Activated naive CD4-positive, alpha-beta T cell treated with anti-CD3 and anti-CD28 coated beads for 36 hours (primary cell): ENCODE measurements at regions of chr5 and their contacts with region 1.

Region 1: DNA sequence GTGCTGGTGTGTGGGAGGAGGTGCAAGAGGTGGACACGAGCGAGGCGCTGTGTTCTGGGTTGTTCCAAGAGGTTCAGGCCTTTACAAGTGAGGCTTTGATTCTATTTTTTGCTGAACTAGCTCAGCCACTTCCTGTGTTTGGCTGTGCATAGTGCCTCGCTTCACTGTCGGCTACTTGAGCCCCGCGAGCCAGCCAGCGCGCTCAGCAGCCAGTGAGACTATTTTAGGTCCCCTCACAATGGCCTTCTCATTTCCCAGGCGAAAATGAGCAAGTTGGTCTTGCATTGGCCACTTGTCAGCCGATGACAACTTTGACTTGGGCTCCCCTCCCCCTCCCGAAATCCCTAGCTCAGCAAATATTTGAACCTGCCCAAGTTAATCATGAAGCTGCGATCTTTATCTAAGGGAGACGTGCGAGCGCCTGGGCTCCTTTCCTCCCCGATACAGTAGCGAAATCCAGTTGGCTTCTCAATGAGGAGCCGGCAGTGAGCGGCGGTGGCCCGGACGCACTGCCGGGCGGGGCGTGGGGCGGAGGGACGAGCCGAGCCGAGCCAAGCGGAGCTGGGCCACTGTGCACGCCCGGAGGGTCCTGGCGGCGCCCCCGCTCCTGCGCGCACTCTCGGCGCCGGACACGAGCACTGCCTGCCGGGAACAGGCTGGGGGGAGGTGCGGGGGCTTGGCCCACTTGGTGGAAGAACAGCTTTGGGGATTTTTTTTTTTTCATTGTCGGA is 72.6 kb downstream of the PIK3R1 start:
- DNase-seq: peak; percentile 58
- H3K4me3 Mint-ChIP-seq: peak overlapping the region; percentile 83
- H3K27ac Mint-ChIP-seq: peak overlapping the region; percentile 81
- H3K4me1 Mint-ChIP-seq: peaks cover 73% of the 10 kb centered on the region
- H3K27me3 Mint-ChIP-seq: no peaks in the 10 kb centered on the region

Region 2: GRCh38 chr5:68239487-68239886 is 48.7 kb before region 1 on chr5:
- CTCF ChIA-PET with region 1: no interaction called
- intact Hi-C with region 1: no loop called
- DNase-seq: peak; percentile 93
- H3K4me3 Mint-ChIP-seq: peak overlapping the region; percentile 36
- H3K27ac Mint-ChIP-seq: peak overlapping the region; percentile 72
- H3K4me1 Mint-ChIP-seq: peaks cover 80% of the 10 kb centered on the region
- H3K27me3 Mint-ChIP-seq: no peaks in the 10 kb centered on the region

Region 3: DNA sequence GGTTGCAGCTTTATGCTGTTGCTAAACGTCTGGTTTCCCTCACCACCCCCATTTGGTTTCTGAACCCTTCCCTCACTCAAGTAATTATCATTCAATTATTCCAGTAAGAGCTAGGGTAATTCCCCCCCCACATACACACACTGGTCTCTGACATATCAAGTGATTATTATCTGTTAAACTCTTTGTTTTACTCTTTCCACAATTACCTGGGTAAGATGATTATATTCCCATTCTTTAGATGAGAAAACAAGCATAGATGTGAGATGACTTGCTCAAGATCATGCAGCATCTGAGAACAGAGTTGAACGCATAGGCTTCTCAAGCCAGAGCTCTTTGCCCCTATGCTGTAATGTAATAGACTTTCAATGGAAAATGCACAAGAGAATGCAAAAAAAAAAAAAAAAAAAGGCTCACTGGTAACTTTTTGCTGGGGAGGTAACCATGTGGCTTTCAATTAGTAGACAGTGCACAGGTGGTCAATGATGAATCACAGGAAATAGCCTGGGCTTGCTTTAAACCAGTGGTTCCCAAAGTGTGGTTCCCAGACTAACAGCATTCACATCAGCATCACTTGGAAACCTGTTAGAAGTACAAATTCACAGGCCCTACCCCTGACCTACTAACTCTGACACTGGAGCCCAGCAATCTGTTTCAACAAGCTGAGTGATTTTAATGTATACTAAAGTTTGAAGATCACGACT is 15.0 kb after region 1 on chr5:
- CTCF ChIA-PET with region 1: interaction called, 19 read pairs
- intact Hi-C with region 1: loop called (anchors 1 kb)
- DNase-seq: no peak
- H3K4me3 Mint-ChIP-seq: no peak overlapping the region
- H3K27ac Mint-ChIP-seq: peak overlapping the region; percentile 51
- H3K4me1 Mint-ChIP-seq: peaks cover 30% of the 10 kb centered on the region
- H3K27me3 Mint-ChIP-seq: no peaks in the 10 kb centered on the region

Region 4: GRCh38 chr5:68460147-68460798 is 172.1 kb after region 1 on chr5:
- CTCF ChIA-PET with region 1: interaction called, 45 read pairs
- intact Hi-C with region 1: loop called (anchors 1 kb)
- DNase-seq: peak; percentile 66
- H3K4me3 Mint-ChIP-seq: no peak overlapping the region
- H3K27ac Mint-ChIP-seq: no peak overlapping the region
- H3K4me1 Mint-ChIP-seq: peaks cover 8% of the 10 kb centered on the region
- H3K27me3 Mint-ChIP-seq: no peaks in the 10 kb centered on the region

Region 5: GRCh38 chr5:68661237-68661636 is 373.1 kb after region 1 on chr5:
- CTCF ChIA-PET with region 1: interaction called, 3 read pairs
- intact Hi-C with region 1: loop called (anchors 1 kb)
- DNase-seq: peak; percentile 31
- H3K4me3 Mint-ChIP-seq: no peak overlapping the region
- H3K27ac Mint-ChIP-seq: no peak overlapping the region
- H3K4me1 Mint-ChIP-seq: peaks cover 7% of the 10 kb centered on the region
- H3K27me3 Mint-ChIP-seq: no peaks in the 10 kb centered on the region

Region 6: DNA sequence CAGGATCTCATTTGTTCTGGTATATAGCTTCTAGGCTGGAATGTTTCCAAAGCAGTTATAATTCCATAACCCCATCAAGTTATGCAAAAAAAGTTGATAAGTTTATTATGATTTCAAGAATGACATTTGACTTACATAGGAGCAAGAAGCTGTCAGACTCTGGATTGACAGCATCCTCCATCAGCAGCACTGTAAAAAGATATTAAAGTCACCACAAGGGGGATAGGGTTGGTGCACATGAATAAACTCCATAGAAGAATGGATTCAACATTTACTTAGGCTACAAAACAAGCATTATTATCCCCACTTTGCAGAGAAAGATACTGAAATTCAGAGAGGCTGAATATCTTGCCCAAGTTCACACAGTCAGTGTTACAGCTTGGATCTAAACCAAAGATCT is 596.7 kb after region 1 on chr5:
- CTCF ChIA-PET with region 1: no interaction called
- intact Hi-C with region 1: loop called (anchors 10 kb)
- DNase-seq: no peak
- H3K4me3 Mint-ChIP-seq: no peak overlapping the region
- H3K27ac Mint-ChIP-seq: no peak overlapping the region
- H3K4me1 Mint-ChIP-seq: peaks cover 30% of the 10 kb centered on the region
- H3K27me3 Mint-ChIP-seq: no peaks in the 10 kb centered on the region

Region 7: DNA sequence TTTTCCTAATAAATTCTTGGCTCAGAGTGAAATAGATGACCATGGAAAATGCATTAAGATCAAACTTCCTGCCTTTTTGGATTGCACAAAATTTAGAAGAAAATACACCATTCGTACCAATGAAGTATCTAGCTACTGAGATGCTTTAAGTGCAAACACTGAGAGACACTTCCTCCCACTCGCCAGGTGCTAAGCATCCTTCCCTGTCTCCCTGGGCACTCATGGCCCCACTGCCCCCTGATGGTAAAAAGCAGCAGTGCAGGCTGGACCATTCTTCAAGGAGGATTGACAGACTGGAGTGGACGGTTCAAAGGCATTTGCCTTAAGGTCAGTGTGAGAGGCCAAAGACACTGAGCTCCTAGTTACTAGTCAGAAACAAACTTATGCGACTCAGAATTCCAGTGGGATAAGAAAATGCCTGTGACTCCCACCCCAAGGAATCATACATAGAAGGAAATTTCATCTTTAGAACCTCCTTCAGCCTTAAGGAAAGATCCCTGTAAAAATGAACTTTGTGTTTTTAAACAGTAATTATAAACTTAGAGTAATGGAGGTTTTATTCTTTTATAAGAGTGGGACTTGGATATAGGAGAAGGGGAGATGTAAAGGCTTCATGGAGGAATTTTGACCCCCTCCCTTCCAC is 719.7 kb after region 1 on chr5:
- CTCF ChIA-PET with region 1: no interaction called
- intact Hi-C with region 1: loop called (anchors 1 kb)
- DNase-seq: peak; percentile 85
- H3K4me3 Mint-ChIP-seq: no peak overlapping the region
- H3K27ac Mint-ChIP-seq: no peak overlapping the region
- H3K4me1 Mint-ChIP-seq: no peaks in the 10 kb centered on the region
- H3K27me3 Mint-ChIP-seq: peaks cover 3% of the 10 kb centered on the region